ENCODE measurements at regions of chr6 and their contacts with region 1.

Region 1: DNA sequence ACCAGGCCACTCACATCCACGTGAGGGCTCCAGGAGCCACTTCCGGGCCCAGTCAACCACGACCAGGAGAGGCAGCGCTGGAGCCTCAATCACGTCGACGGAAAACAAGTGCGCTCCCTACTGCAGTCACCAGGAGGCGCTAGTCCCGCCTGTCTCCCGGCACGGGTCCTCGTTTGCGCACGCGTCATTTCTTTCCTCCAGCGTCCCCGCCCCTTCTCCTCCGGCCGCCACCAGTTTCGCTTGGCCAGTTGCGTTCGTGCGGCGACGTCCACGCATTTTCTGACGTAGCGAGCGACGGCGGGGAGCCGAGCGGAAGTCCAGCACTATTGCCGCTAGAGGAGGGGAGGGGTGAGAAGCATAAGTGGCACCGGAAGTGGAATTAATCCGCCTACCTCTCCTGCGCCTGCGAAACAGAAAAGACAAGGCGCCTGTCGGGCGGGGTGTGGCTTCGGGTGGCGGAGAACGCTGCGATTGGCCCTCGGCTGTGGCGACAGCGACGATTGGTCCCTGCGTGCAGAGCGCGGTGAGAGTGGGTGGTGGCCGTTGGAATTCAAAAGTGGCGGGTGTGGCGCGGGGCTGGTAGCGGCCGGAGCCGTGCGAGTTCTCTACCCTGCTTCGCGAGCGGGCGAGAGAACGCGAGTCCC is at the start of gene KIFC1:
- DNase-seq: peak; percentile 100
- H3K4me3 Mint-ChIP-seq: peak within 1 kb of the TSS; percentile 82
- H3K27ac Mint-ChIP-seq: peak within 1 kb of the TSS; percentile 97
- H3K4me1 Mint-ChIP-seq: peaks cover 41% of the 10 kb centered on the region
- H3K27me3 Mint-ChIP-seq: no peaks in the 10 kb centered on the region
- total RNA-seq, gene KIFC1: 107 TPM

Region 2: DNA sequence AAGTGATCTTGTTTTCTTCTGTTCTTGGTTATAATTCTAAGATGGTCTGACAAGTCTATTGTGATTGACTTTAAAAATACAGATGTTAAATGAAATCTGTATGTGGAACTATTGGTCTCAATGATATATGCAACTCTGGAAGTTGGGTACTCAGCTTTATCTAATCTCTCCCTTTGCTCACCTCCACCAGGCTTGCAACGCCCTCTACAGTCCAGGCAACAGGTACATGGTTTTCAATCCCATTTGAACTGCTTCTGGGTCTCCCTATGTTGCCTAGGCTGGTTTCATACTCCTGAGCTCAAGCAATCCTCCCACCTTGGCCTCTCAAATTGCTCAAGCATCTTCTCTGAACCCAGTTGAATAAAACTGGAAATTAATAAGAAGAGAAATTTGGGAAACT is 699.4 kb before region 1 on chr6:
- CTCF ChIA-PET with region 1: no interaction called
- intact Hi-C with region 1: no loop called
- DNase-seq: peak; percentile 81
- H3K4me3 Mint-ChIP-seq: no peak overlapping the region
- H3K27ac Mint-ChIP-seq: no peak overlapping the region
- H3K4me1 Mint-ChIP-seq: peaks cover 3% of the 10 kb centered on the region
- H3K27me3 Mint-ChIP-seq: peaks cover 9% of the 10 kb centered on the region

Region 3: DNA sequence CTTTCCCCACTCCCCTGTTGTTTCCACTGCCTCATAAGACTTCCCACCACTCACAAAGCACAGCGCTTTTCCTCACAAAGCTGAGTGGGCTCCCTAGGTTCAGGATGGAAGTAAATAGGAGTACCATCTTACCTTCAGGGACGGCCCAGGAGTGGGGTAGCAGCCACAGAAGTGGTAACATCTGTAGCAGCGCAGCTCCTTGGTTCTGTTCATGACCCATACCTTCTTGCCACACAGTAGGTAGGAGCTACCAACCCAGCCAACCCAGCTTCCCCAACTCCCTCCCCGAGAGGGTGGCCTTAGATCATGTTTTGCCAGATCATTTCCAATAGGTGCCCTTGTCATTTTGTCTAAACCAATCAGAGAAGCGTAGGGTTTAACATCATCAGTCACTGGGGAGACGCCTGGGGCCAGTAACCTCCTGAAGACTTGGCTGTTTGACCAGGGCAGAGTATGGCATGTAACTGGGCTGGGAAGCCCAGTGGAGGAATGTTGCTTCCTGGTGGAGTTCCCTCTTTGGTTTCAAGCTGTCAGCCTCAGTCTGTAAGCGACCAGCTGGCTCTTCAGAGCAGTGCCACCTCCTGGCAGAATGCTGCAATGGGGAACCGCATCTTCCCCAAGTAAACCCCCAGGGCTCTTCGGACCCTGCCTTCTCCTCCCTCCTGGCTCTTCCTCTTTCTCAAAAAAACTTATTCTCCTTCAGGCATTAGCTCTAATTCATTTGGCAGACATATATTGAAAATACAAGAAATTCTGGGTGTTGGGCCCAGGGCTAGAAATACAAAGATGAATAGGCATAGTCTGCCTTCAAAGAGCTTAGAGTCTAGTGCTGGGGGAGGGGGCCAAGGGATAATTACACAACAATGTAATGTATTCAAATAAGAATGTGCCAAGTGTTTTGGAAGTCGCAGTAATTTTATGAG is 438.3 kb before region 1 on chr6 and contains the start of gene HLA-DMA:
- CTCF ChIA-PET with region 1: no interaction called
- intact Hi-C with region 1: no loop called
- DNase-seq: peak; percentile 87
- H3K4me3 Mint-ChIP-seq: peak within 1 kb of the TSS; percentile 73
- H3K27ac Mint-ChIP-seq: peak within 1 kb of the TSS; percentile 60
- H3K4me1 Mint-ChIP-seq: peaks cover 47% of the 10 kb centered on the region
- H3K27me3 Mint-ChIP-seq: no peaks in the 10 kb centered on the region
- total RNA-seq, gene HLA-DMA: 12.7 to 14.5 TPM

Region 4: GRCh38 chr6:33200219-33201146 is 190.9 kb before region 1 on chr6 and contains the starts of genes RXRB and SLC39A7:
- CTCF ChIA-PET with region 1: no interaction called
- intact Hi-C with region 1: loop called (anchors 5 kb)
- DNase-seq: peak; percentile 100
- H3K4me3 Mint-ChIP-seq: peak within 1 kb of the TSS; percentile 98
- H3K27ac Mint-ChIP-seq: peak within 1 kb of the TSS; percentile 97
- H3K4me1 Mint-ChIP-seq: peaks cover 60% of the 10 kb centered on the region
- H3K27me3 Mint-ChIP-seq: no peaks in the 10 kb centered on the region
- total RNA-seq, gene RXRB: 50.4 to 50.6 TPM
- total RNA-seq, gene SLC39A7: 35.9 to 39.5 TPM

Region 5: DNA sequence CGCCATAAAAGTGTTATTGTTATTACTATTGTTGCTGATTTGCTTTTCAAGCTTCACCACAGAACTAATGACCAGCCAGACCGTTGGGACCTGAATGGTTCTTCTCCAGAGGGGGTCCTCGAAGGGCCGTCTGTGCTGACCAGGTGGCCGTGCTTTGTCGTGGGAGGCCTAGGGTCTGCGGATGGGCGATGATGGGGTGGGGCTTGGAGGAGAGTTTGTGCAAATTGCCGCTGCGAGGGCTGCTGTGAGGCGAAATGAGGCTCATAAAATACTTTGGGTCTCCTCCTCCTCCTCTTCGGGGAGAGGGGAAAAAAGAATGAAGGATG is 67.8 kb before region 1 on chr6:
- CTCF ChIA-PET with region 1: interaction called, 3 read pairs
- intact Hi-C with region 1: loop called (anchors 1 kb)
- DNase-seq: no peak
- H3K4me3 Mint-ChIP-seq: peak overlapping the region; percentile 95
- H3K27ac Mint-ChIP-seq: peak overlapping the region; percentile 98
- H3K4me1 Mint-ChIP-seq: peaks cover 43% of the 10 kb centered on the region
- H3K27me3 Mint-ChIP-seq: no peaks in the 10 kb centered on the region

Region 6: DNA sequence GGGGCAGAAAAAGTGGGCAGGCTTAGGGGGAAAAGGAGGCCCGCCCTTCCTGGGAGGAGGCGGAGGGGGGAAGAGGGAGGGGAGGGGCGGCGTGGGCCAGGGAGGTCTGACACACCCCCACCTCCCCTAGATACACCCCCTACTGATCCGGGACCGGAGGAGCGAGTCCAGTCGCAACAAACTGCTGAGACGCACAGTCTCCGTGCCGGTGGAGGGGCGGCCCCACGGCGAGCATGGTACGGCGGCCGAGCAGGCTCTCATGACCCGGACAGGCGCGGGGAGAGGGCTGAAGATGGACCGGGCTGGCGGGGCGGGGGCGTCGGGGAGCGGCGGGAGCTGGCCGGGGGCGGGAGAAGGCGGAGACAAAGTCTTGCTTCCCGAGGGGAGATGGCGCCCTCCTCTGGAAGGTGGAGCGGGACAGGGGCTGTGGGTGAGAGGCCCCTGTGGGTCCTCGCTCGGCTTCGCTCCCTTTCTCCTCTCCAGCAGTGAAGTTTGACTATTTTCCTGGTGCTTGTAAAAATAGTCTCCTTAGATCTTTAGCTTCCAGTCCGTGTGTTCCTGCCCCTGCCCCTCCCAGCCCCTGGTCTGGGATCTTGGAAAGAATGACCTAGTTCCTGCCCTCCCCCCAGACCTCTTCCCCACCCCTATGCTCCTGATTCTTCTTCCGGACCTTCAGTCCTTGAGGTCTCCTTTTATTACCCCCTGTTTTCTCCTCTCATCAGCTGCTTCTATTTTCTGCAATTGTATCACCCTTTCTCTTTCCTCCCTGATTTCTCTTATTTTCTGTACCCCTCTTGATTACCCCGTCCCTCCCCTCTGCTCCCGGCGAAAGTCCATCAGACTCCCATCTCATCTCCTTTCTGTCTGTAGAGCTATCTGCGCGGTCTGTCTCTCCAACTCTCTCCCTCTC is 34.5 kb after region 1 on chr6:
- CTCF ChIA-PET with region 1: interaction called, 18 read pairs
- intact Hi-C with region 1: loop called (anchors 1 kb)
- DNase-seq: peak; percentile 93
- H3K4me3 Mint-ChIP-seq: peak overlapping the region; percentile 87
- H3K27ac Mint-ChIP-seq: peak overlapping the region; percentile 88
- H3K4me1 Mint-ChIP-seq: peaks cover 59% of the 10 kb centered on the region
- H3K27me3 Mint-ChIP-seq: no peaks in the 10 kb centered on the region

Region 7: DNA sequence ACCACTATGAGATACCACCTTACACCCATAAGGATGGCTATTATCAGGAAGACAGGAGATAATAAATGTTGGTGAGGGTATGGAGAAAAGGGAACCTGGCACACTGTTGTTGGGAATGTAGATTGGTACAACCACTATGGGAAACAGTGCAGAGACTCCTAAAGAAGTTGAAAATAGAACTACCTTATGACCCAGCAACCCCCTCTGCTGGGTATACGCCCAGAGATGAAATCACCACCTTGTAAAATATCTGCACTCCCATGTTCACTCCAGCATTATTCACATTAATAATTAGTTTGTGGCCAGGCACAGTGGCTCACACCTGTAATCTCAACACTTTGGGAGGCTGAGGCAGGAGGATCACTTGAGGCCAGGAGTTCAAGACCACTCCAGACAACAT is 89.8 kb after region 1 on chr6:
- CTCF ChIA-PET with region 1: no interaction called
- intact Hi-C with region 1: no loop called
- DNase-seq: peak; percentile 10
- H3K4me3 Mint-ChIP-seq: no peak overlapping the region
- H3K27ac Mint-ChIP-seq: no peak overlapping the region
- H3K4me1 Mint-ChIP-seq: no peaks in the 10 kb centered on the region
- H3K27me3 Mint-ChIP-seq: no peaks in the 10 kb centered on the region

Region 8: GRCh38 chr6:33579828-33580714 is 188.7 kb after region 1 on chr6 and contains the start of gene BAK1:
- CTCF ChIA-PET with region 1: interaction called, 3 read pairs
- intact Hi-C with region 1: loop called (anchors 2 kb)
- DNase-seq: peak; percentile 92
- H3K4me3 Mint-ChIP-seq: peak within 1 kb of the TSS; percentile 86
- H3K27ac Mint-ChIP-seq: peak within 1 kb of the TSS; percentile 96
- H3K4me1 Mint-ChIP-seq: peaks cover 35% of the 10 kb centered on the region
- H3K27me3 Mint-ChIP-seq: no peaks in the 10 kb centered on the region
- total RNA-seq, gene BAK1: 38.3 to 41.1 TPM

Region 9: DNA sequence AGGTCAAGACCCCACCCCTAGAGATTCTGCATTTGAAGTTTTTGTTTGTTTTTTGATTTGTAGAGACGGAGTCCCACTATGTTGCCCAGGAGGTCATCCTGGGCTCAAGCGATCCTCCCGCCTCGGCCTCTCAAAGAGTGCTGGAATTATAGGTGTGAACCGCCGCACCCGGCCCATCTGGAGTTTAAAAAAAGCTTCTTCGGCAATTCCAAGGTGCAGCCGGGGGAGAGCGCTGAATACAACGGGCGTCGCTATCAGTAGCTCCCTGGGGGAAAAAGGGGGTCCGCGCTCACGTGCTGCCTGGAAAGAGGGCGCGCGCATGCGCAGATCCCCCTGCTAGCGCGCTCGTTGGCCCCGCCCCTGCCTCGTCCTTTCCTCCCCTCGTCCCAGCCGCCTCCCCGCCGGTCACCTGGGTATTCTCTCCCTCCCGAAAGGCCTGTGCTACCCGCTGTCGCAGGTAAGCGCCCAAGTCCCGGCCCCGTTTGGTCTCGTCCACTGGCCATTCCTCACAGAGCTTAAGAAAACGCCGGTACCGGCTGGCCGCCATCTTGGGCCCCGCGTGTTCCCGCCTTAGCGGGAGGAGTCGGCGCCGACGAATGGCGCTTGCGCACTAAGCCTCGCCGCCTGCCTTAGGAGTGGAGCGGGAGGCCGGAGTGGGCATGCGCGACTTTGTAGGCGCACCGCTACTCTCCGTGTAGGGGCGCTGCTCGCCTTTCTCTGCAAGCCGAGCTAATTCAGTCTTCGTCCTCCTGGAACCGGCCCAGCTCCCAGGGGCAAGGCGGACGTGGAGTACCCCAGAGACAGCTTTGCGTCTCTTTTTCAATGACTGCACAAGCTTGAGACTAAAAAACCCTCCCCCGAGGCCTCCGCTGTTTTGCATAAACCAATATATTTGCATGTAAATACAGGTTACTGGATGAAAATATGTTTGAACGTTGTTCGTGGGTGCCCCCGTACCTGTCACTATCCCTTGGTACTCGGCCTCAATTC is 320.0 kb after region 1 on chr6 and contains the start of gene UQCC2:
- CTCF ChIA-PET with region 1: no interaction called
- intact Hi-C with region 1: loop called (anchors 1 kb)
- DNase-seq: peak; percentile 98
- H3K4me3 Mint-ChIP-seq: peak within 1 kb of the TSS; percentile 95
- H3K27ac Mint-ChIP-seq: peak within 1 kb of the TSS; percentile 96
- H3K4me1 Mint-ChIP-seq: peaks cover 28% of the 10 kb centered on the region
- H3K27me3 Mint-ChIP-seq: no peaks in the 10 kb centered on the region
- total RNA-seq, gene UQCC2: 199 to 205 TPM

Region 10: DNA sequence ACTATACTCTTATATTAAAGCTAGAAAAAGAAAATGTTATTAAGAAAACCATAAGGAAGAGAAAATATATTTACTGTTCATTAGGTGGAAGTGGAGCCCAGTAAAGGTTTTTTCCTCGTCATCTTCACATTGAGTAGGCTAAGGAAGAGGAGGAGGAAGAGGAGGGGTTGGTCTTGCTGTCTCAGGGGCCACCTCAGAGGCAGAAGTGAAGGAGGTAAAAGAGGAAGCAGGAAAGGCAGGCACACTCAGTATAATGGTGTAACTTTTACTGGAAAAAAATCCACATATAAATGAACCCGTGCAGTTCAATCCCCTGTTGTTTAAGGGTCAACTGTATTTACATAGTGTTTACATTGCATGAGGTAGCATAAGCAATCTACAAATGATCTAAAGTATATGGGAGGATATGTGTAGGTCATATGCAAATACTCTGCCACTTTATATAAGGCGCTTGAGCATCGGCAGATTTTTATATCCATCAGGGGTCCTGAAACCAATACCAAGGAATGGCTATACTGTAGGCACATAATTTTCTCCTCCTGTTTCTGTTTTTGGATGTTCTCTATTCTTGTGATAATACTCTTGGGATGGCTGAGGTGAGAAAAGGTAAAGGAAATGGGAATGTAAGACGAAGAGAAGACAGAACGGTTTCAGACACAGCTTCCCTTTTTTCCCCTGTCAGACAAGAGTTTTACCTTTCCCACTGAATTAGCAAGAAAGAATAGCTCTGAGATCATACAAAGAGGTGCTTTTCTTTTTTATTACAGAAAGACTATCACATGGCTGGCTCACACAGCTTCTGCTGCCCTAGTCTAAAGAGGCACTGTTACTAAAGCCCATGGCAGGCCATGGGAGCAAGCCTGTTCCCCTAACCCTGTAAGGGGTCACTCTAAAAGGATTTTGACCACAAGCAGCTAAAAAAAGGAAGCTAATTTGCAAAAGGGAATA is 941.1 kb after region 1 on chr6:
- CTCF ChIA-PET with region 1: no interaction called
- intact Hi-C with region 1: no loop called
- DNase-seq: no peak
- H3K4me3 Mint-ChIP-seq: no peak overlapping the region
- H3K27ac Mint-ChIP-seq: no peak overlapping the region
- H3K4me1 Mint-ChIP-seq: peaks cover 11% of the 10 kb centered on the region
- H3K27me3 Mint-ChIP-seq: no peaks in the 10 kb centered on the region